Activated naive CD4-positive, alpha-beta T cell treated with anti-CD3 and anti-CD28 coated beads for 36 hours (primary cell): ENCODE measurements at regions of chr12 and their contacts with region 1.

Region 1: DNA sequence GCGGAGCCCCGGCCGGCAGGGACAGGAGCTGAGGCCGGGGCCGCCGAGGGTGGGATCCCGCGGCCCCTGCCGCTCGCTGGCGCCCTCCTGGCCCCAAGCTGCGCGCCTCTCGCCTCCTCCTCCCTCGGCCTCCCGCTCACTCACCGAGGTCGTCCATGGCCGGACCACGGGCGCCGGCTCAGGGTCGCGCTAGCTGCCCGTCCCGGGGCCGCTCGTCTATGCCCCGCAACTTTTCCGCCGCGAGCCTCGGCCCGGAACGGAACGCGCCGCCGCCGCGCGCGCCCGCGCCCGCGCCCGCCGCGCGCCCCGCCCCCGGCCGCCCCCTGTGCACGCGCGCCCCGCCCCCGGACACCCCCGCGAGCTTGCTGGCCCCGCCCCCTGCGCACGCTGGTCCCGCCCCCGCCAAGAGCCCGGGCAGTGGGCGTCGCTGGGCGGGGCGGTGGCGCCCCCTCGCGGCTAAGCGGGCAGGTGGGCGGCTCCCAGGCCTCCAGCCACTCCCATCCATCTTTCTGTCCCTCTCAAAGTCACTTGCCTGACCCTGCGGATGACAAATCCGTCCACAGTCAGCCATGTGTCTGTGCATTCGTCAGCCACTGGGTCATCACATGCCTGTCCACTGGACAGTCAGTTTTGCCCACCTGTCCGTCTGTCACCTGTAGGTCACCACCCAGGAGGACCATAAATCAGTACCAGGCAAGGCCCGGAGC is at the start of gene PXN:
- DNase-seq: peak; percentile 90
- H3K4me3 Mint-ChIP-seq: peak within 1 kb of the TSS; percentile 89
- H3K27ac Mint-ChIP-seq: peak within 1 kb of the TSS; percentile 87
- H3K4me1 Mint-ChIP-seq: peaks cover 44% of the 10 kb centered on the region
- H3K27me3 Mint-ChIP-seq: no peaks in the 10 kb centered on the region
- total RNA-seq, gene PXN: 109 to 112 TPM

Region 2: DNA sequence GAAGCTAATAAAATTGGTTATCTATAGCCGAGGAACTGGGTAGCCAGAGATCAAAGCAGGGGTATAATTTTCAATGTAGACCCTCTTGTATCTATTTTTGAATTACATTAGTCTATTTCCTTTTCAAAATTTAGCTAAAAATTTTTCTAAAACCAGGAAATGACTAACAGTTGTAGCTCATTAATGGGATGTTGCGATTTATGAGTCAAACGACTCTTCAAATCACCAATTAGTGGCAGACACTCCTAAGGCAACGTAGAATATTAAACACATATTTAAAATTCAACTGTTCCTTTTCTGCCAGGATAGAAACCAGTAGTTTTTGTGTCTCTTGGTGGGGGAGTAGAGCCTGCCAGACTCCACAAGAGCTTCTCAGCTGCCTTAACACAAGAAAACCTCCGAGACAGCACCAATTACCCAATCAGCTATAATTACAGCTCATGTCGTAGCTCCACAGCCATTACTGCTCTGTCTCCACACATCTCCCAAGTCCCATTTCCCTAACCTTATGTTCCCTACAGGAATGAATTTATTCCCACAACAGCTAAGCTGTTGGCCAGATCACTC is 98.0 kb before region 1 on chr12:
- CTCF ChIA-PET with region 1: no interaction called
- intact Hi-C with region 1: no loop called
- DNase-seq: no peak
- H3K4me3 Mint-ChIP-seq: no peak overlapping the region
- H3K27ac Mint-ChIP-seq: peak overlapping the region; percentile 53
- H3K4me1 Mint-ChIP-seq: no peaks in the 10 kb centered on the region
- H3K27me3 Mint-ChIP-seq: no peaks in the 10 kb centered on the region

Region 3: DNA sequence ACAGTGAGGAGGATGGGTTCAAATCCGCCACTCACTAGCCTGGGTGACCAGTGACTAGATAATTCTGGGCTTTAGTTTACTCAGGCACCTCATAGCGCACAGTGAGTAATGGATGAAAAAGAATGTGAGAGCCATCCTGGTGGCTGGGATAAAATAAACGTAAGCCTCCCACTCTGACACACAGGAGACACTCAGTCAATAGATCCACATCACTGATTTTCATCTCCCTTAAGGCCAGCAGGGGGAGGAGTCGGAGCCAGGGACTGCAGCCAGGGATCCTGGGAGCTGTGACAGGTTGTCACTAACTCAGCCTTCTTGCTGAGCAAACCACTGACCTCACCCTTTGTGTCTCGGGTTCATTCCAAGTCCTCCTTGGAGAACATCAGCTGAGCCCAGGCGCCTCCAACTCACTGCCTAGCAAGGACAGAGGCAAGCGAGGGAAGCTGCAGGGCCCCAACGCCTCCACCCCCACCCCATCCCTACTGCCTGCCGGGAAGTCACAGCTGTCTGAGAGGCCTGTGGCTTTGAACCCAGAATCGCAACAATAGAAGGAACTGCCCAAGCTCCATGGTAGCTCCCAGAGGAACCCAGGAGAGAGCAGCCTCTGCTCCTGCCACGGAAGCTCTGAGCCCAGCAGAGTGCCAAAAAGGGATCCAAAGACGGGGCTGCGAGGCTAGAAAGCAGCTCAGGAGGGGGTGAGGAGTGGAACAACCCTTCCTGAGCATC is 30.8 kb before region 1 on chr12:
- CTCF ChIA-PET with region 1: interaction called, 637 read pairs
- intact Hi-C with region 1: no loop called
- DNase-seq: peak; percentile 12
- H3K4me3 Mint-ChIP-seq: no peak overlapping the region
- H3K27ac Mint-ChIP-seq: peak overlapping the region; percentile 97
- H3K4me1 Mint-ChIP-seq: peaks cover 87% of the 10 kb centered on the region
- H3K27me3 Mint-ChIP-seq: no peaks in the 10 kb centered on the region

Region 4: GRCh38 chr12:120249875-120250795 is 15.5 kb before region 1 on chr12:
- CTCF ChIA-PET with region 1: interaction called, 95 read pairs
- intact Hi-C with region 1: loop called (anchors 1 kb)
- DNase-seq: peak; percentile 69
- H3K4me3 Mint-ChIP-seq: peak overlapping the region; percentile 41
- H3K27ac Mint-ChIP-seq: peak overlapping the region; percentile 84
- H3K4me1 Mint-ChIP-seq: peaks cover 80% of the 10 kb centered on the region
- H3K27me3 Mint-ChIP-seq: no peaks in the 10 kb centered on the region

Region 5: GRCh38 chr12:120292661-120293531 is 27.3 kb after region 1 on chr12 and contains the start of gene RNU4-1:
- CTCF ChIA-PET with region 1: interaction called, 6 read pairs
- intact Hi-C with region 1: loop called (anchors 2 kb)
- DNase-seq: peak; percentile 88
- H3K4me3 Mint-ChIP-seq: no peak within 1 kb of the TSS
- H3K27ac Mint-ChIP-seq: no peak within 1 kb of the TSS
- H3K4me1 Mint-ChIP-seq: peaks cover 6% of the 10 kb centered on the region
- H3K27me3 Mint-ChIP-seq: no peaks in the 10 kb centered on the region
- total RNA-seq, gene RNU4-1: 685 to 1,294 TPM

Region 6: DNA sequence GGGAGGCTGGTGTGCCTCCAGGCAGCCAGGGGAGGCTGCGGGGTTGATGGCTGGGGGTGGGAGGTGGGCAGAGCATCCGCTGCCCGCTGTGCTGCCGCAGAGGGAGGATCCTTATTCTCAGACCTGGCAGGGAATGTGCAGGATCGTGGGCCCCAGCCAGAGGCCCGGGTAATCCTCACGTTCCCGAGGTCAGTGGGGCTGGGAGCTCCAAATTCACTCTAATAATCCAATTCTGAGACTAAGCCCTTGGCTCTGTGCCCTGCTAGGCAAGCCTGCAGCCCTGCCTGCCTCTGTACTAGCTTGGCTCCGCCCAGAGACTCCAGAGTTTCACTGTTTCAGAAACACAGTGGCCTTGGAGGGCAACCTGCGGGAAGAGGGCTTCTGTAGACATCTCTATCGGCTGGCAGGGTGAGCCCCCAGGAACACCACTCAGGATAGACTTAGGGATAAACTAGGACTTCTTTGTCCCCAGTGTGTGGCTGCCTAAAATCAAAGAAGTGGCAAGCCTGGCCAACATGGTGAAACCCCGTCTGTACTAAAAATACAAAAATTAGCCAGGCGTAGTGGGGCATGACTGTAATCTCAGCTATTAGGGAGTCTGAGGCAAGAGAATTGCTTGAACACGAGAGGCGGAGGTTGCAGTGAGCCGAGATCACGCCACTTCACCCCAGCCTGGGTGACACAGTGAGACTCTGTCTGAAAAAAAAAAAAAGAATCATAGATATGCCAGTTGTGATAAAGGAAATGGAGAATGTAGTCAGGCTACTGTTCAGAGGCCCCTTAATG is 403.6 kb after region 1 on chr12:
- CTCF ChIA-PET with region 1: no interaction called
- intact Hi-C with region 1: no loop called
- DNase-seq: no peak
- H3K4me3 Mint-ChIP-seq: no peak overlapping the region
- H3K27ac Mint-ChIP-seq: no peak overlapping the region
- H3K4me1 Mint-ChIP-seq: no peaks in the 10 kb centered on the region
- H3K27me3 Mint-ChIP-seq: no peaks in the 10 kb centered on the region